ENCODE measurements at regions of chr17 and their contacts with region 1.

Region 1: GRCh38 chr17:63514974-63515373 is 8.2 kb upstream of the KCNH6 start:
- DNase-seq: no peak
- ATAC-seq: no peak
- H3K4me3 ChIP-seq: no peak overlapping the region
- H3K4me3 Mint-ChIP-seq: no peak overlapping the region
- H3K27ac ChIP-seq: no peak overlapping the region
- H3K27ac Mint-ChIP-seq: no peak overlapping the region
- H3K4me1 ChIP-seq: no peaks in the 10 kb centered on the region
- H3K4me1 Mint-ChIP-seq: no peaks in the 10 kb centered on the region
- H3K27me3 ChIP-seq: peaks cover 2 to 21% of the 10 kb centered on the region in 2 experiments
- H3K27me3 Mint-ChIP-seq: peaks cover 5 to 7% of the 10 kb centered on the region in 2 donors

Region 2: GRCh38 chr17:63526861-63527260 is 11.9 kb after region 1 on chr17:
- CTCF ChIA-PET with region 1: no interaction called
- POLR2A ChIA-PET with region 1: interaction called in 1 of 2 experiments, 10 read pairs
- DNase-seq: no peak
- ATAC-seq: no peak
- H3K4me3 ChIP-seq: no peak overlapping the region
- H3K4me3 Mint-ChIP-seq: no peak overlapping the region
- H3K27ac ChIP-seq: no peak overlapping the region
- H3K27ac Mint-ChIP-seq: no peak overlapping the region
- H3K4me1 ChIP-seq: peaks cover 0 to 5% of the 10 kb centered on the region in 2 experiments
- H3K4me1 Mint-ChIP-seq: peaks cover 7 to 8% (median 8%) of the 10 kb centered on the region in 3 donors
- H3K27me3 ChIP-seq: peaks cover 7 to 34% of the 10 kb centered on the region in 2 experiments
- H3K27me3 Mint-ChIP-seq: peaks cover 18% of the 10 kb centered on the region in 2 donors